ENCODE measurements at regions of chr3 and their contacts with region 1.

Region 1: DNA sequence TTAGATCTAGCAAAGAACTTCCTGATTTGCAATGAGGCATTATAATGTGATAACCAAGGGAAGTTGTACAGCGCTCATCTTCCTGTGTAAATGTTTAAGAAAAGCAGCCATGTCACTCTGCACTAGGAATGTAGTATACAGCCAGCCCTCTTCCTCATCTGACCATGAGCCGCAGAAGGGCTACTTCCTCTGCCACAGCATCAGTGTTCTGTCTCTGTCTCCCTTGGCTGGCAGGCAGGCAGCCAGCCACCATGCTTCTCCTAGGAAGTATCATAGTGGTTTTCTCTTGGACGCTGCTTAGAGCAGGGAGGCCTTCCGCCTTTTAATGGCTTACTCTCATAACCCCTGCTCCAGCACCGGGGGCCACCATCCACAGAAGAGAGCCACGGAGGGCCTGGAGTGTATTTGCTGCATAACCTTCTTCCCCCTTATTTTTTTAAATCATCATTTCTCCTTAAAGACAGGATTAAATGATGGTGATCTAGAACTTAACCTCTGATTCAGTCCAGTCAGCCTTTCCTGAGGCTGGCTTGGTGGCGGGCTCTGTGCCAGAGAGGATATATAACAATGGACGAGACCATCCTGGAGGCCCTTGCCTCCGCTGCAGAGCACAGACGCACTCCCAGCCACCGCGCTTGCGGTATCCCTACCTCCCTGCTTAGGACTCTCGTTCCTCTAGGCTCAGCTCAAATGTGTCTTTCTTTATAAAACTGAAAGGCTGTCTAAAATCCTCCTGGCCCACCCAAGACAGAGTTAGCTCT is 57.3 kb upstream of the PLXNA1 start:
- DNase-seq: no peak
- H3K4me3 Mint-ChIP-seq: no peak overlapping the region
- H3K27ac Mint-ChIP-seq: no peak overlapping the region
- H3K4me1 Mint-ChIP-seq: peaks cover 29% of the 10 kb centered on the region
- H3K27me3 Mint-ChIP-seq: no peaks in the 10 kb centered on the region

Region 2: GRCh38 chr3:126679318-126679751 is 246.3 kb before region 1 on chr3:
- CTCF ChIA-PET with region 1: no interaction called
- POLR2A ChIA-PET with region 1: no interaction called
- DNase-seq: peak; percentile 75
- H3K4me3 Mint-ChIP-seq: peak overlapping the region; percentile 5
- H3K27ac Mint-ChIP-seq: no peak overlapping the region
- H3K4me1 Mint-ChIP-seq: peaks cover 3% of the 10 kb centered on the region
- H3K27me3 Mint-ChIP-seq: peaks cover 21% of the 10 kb centered on the region

Region 3: GRCh38 chr3:126911162-126912026 is 14.2 kb before region 1 on chr3:
- CTCF ChIA-PET with region 1: interaction called, 6 read pairs
- POLR2A ChIA-PET with region 1: interaction called, 10 read pairs
- DNase-seq: peak; percentile 87
- H3K4me3 Mint-ChIP-seq: peak overlapping the region; percentile 67
- H3K27ac Mint-ChIP-seq: peak overlapping the region; percentile 93
- H3K4me1 Mint-ChIP-seq: peaks cover 64% of the 10 kb centered on the region
- H3K27me3 Mint-ChIP-seq: peaks cover 2% of the 10 kb centered on the region

Measured in activated CD4-positive, alpha-beta memory T cell treated with anti-CD3 and anti-CD28 coated beads, Interleukin-2, amount 10 ng/mL, durations not matched to agents 7 days and 5 days (primary cell).